ENCODE measurements at regions of chr1 and their contacts with region 1.

Region 1: DNA sequence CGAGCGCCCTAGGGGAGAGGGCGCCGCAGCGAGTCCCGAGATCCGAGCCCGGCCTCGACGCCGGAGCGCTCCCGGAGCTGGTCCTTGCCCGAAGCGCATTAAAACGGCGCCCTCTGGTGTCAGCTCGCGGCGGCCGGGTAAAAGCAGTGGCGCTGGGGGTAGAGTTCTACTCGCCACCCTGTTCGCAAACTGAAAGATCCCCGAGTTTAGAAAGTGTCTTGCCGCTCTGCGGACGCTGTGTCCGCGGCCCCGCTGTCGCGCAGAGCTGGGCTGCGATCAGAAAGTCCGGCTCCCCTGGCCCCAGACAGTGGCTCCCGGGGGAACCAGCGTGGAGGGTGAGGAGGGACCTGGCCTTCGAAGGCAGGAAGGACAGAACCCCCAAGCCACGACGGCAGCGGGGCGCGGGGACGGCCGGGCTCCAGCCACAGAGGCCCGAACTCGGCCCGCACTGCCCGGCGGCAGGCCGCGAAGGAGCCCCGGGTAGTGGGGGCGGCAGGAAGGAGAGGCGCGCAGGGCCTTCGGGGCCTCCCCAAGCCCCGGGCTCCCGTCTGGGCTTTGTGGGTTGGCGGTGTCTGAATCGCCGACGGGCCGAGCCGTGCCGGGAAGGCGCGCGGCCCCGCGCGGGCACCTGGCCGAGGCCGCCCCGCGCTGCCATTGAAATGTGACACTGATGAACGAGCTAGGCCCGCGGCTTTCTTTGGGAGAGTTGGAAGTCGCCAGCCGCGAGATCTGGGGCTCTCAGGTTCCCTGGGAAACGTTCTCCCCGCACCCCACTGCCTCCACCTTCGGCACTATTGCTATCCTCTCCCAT is 39.1 kb upstream of the NFIA start:
- DNase-seq: peak; percentile 48
- ATAC-seq: peak; percentile 96
- H3K4me3 ChIP-seq: peak overlapping the region; percentile 30
- H3K27ac ChIP-seq: no peak overlapping the region
- H3K4me1 ChIP-seq: no peaks in the 10 kb centered on the region
- H3K27me3 ChIP-seq: peaks cover 17% of the 10 kb centered on the region
- CTCF ChIP-seq: peak; percentile 68
- POLR2A ChIP-seq: no peak
- RAD21 ChIP-seq: peak; percentile 74

Region 2: DNA sequence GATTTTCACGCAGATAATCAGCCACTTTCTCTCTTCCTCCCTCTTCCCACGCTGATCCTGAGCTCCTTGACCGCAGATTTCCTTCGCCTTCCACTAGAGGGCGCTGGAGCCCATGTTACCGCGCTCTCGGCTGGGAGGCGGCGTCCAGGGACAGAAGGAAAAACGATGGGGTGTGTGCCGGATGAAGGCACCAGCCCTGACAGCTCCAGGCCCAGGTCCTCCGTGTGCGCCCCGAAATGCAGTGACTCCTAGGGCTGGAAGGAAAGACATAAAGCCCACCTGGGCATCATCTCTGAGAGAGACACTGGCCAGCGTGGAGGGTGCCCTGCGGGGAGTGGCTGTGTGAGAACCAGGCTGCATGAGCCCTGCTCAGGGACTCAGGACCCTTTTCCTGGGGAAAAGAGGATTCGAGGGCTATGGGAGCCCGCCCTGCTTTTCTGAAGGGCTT is 1071.7 kb before region 1 on chr1:
- CTCF ChIA-PET with region 1: interaction called, 4 read pairs
- POLR2A ChIA-PET with region 1: no interaction called
- dilution Hi-C with region 1: no loop called
- in situ Hi-C with region 1: loop called (anchors 25 kb)
- intact Hi-C with region 1: loop called (anchors 1 kb)
- DNase-seq: peak; percentile 34
- ATAC-seq: peak; percentile 84
- H3K4me3 ChIP-seq: no peak overlapping the region
- H3K27ac ChIP-seq: no peak overlapping the region
- H3K4me1 ChIP-seq: peaks cover 5% of the 10 kb centered on the region
- H3K27me3 ChIP-seq: peaks cover 15% of the 10 kb centered on the region
- CTCF ChIP-seq: peak; percentile 88
- POLR2A ChIP-seq: no peak
- RAD21 ChIP-seq: peak; percentile 68

Region 3: GRCh38 chr1:60994369-60994768 is 48.8 kb before region 1 on chr1:
- CTCF ChIA-PET with region 1: no interaction called
- POLR2A ChIA-PET with region 1: no interaction called
- dilution Hi-C with region 1: no loop called
- in situ Hi-C with region 1: no loop called
- intact Hi-C with region 1: no loop called
- DNase-seq: no peak
- ATAC-seq: no peak
- H3K4me3 ChIP-seq: no peak overlapping the region
- H3K27ac ChIP-seq: no peak overlapping the region
- H3K4me1 ChIP-seq: peaks cover 3% of the 10 kb centered on the region; the same call in 1 of the 2 replicates
- H3K27me3 ChIP-seq: no peaks in the 10 kb centered on the region
- CTCF ChIP-seq: no peak
- POLR2A ChIP-seq: no peak
- RAD21 ChIP-seq: no peak

Region 4: GRCh38 chr1:61056573-61057439 is 13.6 kb after region 1 on chr1:
- CTCF ChIA-PET with region 1: no interaction called
- POLR2A ChIA-PET with region 1: no interaction called
- dilution Hi-C with region 1: no loop called
- in situ Hi-C with region 1: no loop called
- intact Hi-C with region 1: no loop called
- DNase-seq: peak; percentile 38
- ATAC-seq: peak; percentile 66
- H3K4me3 ChIP-seq: peak overlapping the region; percentile 53
- H3K27ac ChIP-seq: no peak overlapping the region
- H3K4me1 ChIP-seq: no peaks in the 10 kb centered on the region; the same call in 1 of the 2 replicates
- H3K27me3 ChIP-seq: peaks cover 33% of the 10 kb centered on the region
- CTCF ChIP-seq: no peak
- POLR2A ChIP-seq: no peak
- RAD21 ChIP-seq: no peak

Region 5: DNA sequence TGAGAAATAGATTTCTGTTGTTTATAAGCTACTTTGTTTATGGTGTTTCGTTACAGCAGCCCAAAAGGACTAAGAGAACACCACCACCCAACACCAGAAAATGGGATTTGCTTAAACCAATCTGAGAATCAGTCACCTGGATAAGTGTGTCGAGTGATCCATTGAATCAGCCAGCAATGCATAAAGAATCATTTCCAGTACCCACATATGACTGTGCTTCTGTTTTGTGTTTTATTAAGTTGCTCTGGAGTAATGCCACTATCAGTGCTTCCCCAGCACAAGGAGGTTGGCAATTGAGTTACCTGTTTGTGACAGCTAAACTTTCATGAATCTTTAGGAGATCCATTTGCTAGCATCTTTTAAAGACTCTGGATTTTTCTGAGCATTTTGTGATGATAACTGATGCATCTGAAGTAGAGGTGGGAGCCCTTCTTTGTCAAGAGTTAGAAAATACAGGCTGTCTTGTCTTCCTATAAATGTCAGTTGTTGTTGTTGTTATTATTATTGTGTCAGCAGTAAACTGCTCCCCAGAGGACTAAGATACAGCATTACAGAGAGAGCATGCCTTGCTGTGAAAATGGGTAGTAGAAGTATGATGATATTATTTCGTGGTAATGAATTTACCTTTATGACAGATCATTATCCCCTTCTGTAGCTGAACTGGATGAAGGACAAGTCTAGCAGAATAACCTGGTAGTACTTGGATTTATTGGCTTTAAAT is 264.4 kb after region 1 on chr1:
- CTCF ChIA-PET with region 1: no interaction called
- POLR2A ChIA-PET with region 1: no interaction called
- dilution Hi-C with region 1: no loop called
- in situ Hi-C with region 1: no loop called
- intact Hi-C with region 1: no loop called
- DNase-seq: no peak
- ATAC-seq: no peak
- H3K4me3 ChIP-seq: no peak overlapping the region
- H3K27ac ChIP-seq: no peak overlapping the region
- H3K4me1 ChIP-seq: no peaks in the 10 kb centered on the region
- H3K27me3 ChIP-seq: no peaks in the 10 kb centered on the region
- CTCF ChIP-seq: no peak
- POLR2A ChIP-seq: no peak
- RAD21 ChIP-seq: no peak

Measured in IMR-90 (cell line).